ENCODE measurements at regions of chr6 and their contacts with region 1.

Region 1: GRCh38 chr6:27472617-27473400 is at the start of gene ZNF184:
- DNase-seq: peak; percentile 93 to 96 (median 95)
- H3K4me3 ChIP-seq: peak within 1 kb of the TSS; percentile 92
- H3K27ac ChIP-seq: peak within 1 kb of the TSS; percentile 24 to 70
- H3K4me1 ChIP-seq: peaks cover under 1% of the 10 kb centered on the region
- H3K27me3 ChIP-seq: no peaks in the 10 kb centered on the region
- CTCF ChIP-seq: peak in 2 of 3 donors; percentile 7 to 19
- EP300 ChIP-seq: peak; percentile 2
- POLR2A ChIP-seq: peak; percentile 68
- total RNA-seq, gene ZNF184: 5.2 to 11.5 (median 8.3) TPM

Region 2: GRCh38 chr6:26553635-26554446 is 919.0 kb before region 1 on chr6:
- intact Hi-C with region 1: loop called in 1 of 4 experiments (anchors 10 kb)
- DNase-seq: peak; percentile 79 to 89 (median 87)
- H3K4me3 ChIP-seq: peak overlapping the region; percentile 46
- H3K27ac ChIP-seq: peak overlapping the region; percentile 64 to 72
- H3K4me1 ChIP-seq: peaks cover 3% of the 10 kb centered on the region
- H3K27me3 ChIP-seq: no peaks in the 10 kb centered on the region
- CTCF ChIP-seq: no peak
- EP300 ChIP-seq: no peak
- POLR2A ChIP-seq: no peak

Region 3: DNA sequence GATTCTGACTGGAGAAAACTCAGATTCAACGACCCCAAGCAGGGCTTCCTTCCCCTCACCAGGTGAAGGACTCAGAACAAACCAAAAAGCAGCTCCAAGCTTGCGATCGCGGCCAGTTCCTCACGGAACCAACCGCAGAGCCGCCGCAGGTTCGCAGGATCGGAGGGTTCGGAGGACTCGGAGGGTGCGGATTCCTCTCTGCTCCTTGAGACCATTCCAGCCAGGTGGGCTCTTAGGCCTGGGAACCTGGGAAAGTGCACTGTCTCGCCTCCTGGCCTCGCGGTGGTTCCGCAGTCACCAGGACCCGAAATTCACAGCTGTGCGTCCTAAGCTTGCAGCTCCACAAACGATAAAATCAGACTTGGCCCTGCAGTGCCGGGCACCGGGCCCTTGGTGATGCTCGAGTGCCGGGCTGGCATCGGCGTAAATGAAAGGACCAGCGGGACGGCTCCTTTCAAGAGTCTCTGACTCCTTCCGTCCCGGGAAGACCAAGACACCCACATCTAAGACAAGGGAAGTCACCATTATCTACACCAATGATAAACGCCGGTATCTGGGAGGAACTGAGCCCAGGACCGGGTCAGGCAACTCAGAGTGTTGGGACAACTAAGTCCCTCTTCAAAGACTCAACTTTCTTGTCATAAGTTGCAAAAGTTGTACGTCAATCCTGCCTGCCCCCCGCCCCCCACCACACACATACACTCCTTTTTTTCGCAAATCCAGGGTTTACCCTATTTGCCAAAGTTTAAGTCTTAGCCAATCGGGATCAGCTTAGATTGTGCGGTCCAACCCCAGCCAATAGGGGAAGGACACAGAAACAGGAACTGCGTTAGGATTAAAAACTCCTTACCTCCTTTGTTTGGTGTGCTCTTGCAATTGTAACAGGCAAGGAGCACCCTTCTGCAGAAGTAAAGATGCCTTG is 295.1 kb before region 1 on chr6:
- intact Hi-C with region 1: loop called in 1 of 4 experiments (anchors 10 kb)
- DNase-seq: peak; percentile 58 to 79 (median 70)
- H3K4me3 ChIP-seq: peak overlapping the region; percentile 56
- H3K27ac ChIP-seq: peak overlapping the region; percentile 76 to 79
- H3K4me1 ChIP-seq: peaks cover 2% of the 10 kb centered on the region
- H3K27me3 ChIP-seq: no peaks in the 10 kb centered on the region
- CTCF ChIP-seq: peak in 2 of 3 donors; percentile 14 to 22
- EP300 ChIP-seq: no peak
- POLR2A ChIP-seq: no peak

Region 4: DNA sequence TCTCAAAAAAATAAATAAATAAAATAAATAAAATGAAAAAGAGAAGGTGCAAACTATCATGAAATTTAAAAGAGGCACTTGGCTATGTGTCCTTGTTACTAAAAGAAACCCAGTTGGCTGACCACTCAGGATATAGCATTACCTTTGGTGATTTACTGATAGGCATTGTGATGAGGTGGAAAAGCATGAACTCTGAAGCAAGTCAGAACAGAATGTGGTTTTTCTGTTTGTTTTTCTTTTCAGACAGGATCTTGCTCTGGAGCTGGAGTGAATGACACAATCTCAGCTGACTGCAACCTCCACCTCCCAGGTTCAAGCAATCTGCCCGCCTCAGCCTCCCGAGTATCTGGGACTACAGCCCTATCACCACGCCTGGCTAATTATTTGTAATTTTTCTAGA is 31.8 kb before region 1 on chr6:
- intact Hi-C with region 1: no loop called
- DNase-seq: no peak
- H3K4me3 ChIP-seq: no peak overlapping the region
- H3K27ac ChIP-seq: no peak overlapping the region
- H3K4me1 ChIP-seq: no peaks in the 10 kb centered on the region
- H3K27me3 ChIP-seq: no peaks in the 10 kb centered on the region
- CTCF ChIP-seq: no peak
- EP300 ChIP-seq: no peak
- POLR2A ChIP-seq: no peak

Region 5: DNA sequence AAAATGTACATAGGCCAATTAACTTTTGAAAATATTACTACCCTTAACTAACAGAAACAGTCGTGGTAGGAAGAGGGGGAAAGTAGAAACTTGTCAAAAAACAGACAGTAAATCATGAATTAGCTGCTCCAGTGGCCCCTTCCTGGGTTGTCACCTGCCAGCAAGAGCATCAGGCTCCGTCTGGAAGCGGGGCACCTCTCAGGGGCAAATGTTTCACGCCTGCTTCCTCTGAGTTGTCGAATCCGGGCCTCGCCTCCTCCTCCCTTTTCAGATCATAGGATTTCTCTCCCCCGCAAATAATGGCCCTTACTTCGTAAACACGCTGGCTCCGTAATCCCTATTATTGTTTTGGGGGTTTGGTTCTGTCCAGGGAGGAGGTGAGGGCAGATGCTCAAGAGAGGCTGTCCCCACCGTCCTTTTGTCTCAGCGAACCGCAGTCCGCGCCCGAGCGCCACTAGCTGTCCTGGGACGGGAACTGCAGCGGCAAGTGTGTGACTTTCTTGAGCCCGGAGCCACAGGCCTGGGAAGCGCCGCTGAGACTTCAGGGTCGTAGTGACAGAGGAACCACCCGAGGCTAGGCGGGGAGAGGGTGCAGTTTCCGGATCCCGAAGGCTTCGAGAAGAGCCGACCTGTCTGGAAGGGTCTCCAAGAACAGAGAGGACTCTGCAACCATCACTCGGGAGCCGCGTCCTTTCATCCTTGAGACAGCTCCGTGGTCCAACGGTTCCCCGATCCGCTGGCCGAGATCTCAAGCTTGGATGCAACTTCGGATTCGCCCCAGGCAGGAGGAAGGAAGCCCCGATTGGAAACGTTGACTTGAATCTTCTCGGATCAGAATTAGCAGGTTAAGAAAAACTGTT is 214.6 kb after region 1 on chr6:
- intact Hi-C with region 1: loop called in 1 of 4 experiments (anchors 10 kb)
- DNase-seq: peak; percentile 78 to 82 (median 81)
- H3K4me3 ChIP-seq: peak overlapping the region; percentile 39
- H3K27ac ChIP-seq: peak overlapping the region; percentile 48 to 74
- H3K4me1 ChIP-seq: peaks cover 1% of the 10 kb centered on the region
- H3K27me3 ChIP-seq: no peaks in the 10 kb centered on the region
- CTCF ChIP-seq: peak; percentile 56 to 68 (median 57)
- EP300 ChIP-seq: no peak
- POLR2A ChIP-seq: no peak

Region 6: DNA sequence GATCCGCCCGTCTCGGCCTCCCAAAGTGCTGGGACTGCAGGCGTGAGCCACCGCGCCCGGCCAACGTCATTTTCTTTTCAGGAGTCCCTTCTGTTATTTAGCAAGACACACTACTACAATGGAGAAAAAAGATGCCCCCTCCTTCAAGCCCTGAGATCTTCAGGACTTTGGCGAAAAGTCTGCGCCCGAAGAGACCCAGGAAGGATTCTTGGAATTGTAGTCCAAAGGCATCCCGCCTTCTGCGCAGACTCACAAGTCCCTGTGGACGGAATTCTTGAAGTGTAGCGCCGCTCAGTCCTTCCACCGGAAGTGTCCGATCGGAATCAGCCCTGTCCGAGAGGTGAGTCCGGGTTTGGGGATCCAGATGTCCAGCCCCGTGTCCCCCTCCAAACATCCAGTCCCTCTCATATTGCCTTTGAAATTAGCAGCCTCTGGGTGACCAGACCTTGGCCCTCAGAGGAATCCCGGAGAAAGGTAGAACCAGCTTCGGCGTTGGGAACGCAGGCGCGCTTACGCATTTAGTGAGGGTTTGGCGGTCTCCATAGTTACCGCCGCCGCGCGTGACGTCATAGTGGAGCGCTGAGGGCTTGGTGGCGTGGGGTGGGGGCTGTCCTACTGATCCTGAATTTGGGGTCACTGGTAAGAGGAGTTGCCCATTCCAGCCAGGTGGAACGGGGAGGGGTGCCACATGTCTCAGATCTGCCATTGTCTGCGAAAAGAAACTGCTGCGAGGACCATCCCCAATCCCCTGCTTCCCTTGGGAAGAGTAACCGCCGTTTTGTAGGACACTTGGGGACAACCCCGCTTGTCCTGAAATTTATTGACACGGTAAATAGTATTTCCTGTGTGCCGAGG is 608.0 kb after region 1 on chr6:
- intact Hi-C with region 1: loop called in 1 of 4 experiments (anchors 10 kb)
- DNase-seq: peak; percentile 92 to 96 (median 94)
- H3K4me3 ChIP-seq: peak overlapping the region; percentile 44
- H3K27ac ChIP-seq: peak overlapping the region; percentile 43 to 77
- H3K4me1 ChIP-seq: peaks cover 5% of the 10 kb centered on the region
- H3K27me3 ChIP-seq: no peaks in the 10 kb centered on the region
- CTCF ChIP-seq: no peak
- EP300 ChIP-seq: no peak
- POLR2A ChIP-seq: peak; percentile 51

Region 7: DNA sequence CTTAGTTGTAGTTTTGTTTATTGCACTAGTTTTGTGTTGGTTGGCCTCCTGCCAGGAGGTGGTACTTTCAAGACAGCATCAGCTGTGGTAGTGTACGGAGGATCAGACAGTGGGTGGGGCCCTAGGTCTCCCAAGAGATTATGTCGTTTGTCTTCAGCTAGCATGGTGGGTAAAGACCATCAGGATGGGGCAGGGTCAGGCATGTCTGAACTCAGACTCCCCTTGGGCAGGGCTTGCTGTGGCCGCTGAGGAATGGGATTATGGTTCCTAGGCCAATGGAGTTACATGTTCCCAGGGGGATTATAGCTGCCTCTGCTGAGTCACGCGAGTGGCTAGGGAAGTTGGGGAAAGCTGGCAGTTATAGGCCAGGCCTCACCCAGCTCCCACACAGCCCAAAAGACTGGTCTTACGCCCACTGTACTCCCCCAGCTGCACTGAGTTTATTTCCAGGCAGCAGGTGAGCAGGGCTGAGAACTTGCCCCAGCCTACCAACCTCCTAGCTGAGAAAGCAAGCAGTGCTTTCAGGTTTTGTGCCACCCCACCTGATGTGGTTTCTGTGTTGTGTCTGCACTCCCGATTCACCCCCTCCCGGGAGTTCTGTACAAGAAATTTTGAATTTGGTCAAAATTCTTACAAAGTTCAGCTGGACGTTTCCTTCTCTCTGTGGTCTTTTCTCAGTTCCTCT is 838.5 kb after region 1 on chr6:
- intact Hi-C with region 1: no loop called
- DNase-seq: no peak
- H3K4me3 ChIP-seq: no peak overlapping the region
- H3K27ac ChIP-seq: no peak overlapping the region
- H3K4me1 ChIP-seq: no peaks in the 10 kb centered on the region
- H3K27me3 ChIP-seq: no peaks in the 10 kb centered on the region
- CTCF ChIP-seq: no peak
- EP300 ChIP-seq: no peak
- POLR2A ChIP-seq: no peak

Measured in ovary (tissue), 10 donors.